ENCODE measurements at regions of chr14 and their contacts with region 1.

Region 1: GRCh38 chr14:34554540-34555333 is 15.2 kb upstream of the EAPP start:
- DNase-seq: peak; percentile 12
- H3K4me3 Mint-ChIP-seq: peak overlapping the region; percentile 62
- H3K27ac Mint-ChIP-seq: peak overlapping the region; percentile 44
- H3K4me1 Mint-ChIP-seq: peaks cover 10% of the 10 kb centered on the region
- H3K27me3 Mint-ChIP-seq: no peaks in the 10 kb centered on the region
- CTCF ChIP-seq: no peak

Region 2: DNA sequence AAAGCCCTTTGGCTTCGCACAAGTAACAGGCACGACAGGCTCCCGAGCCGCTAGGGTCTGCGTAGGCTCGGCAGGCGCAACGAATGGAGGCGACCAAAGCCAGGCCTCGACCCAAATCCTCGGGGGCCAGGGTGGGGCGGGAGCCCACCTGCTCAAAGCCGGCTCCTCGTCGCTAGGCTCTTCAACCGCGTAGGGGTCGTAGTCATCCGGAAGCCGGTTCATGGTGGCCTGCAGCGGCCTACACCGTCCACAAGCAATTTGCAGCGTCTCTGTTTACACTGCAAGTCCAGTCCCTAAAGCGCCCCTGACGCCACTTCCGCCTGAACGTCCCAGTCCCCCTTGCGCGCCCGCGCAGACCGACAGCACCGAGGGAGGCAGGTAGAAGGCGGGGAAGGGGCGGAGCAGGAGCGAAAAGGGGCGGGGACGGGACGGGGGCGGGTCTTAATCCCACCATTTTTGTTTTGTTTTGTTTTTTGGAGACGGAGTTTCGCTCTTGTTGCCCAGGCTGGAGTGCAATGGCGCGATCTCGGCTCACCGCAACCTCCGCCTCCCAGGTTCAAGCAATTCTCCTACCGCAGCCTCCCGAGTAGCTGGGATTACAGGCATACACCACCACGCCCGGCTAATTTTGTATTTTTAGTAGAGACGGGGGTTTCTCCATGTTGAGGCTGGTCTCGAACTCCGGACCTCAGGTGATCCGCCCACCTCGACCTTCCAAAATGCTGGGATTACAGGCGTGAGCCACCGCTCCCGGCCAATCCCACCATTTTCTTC is 15.1 kb before region 1 on chr14 and contains the start of gene EAPP:
- CTCF ChIA-PET with region 1: no interaction called
- POLR2A ChIA-PET with region 1: interaction called, 14 read pairs
- intact Hi-C with region 1: no loop called
- DNase-seq: peak; percentile 97
- H3K4me3 Mint-ChIP-seq: peak within 1 kb of the TSS; percentile 98
- H3K27ac Mint-ChIP-seq: peak within 1 kb of the TSS; percentile 100
- H3K4me1 Mint-ChIP-seq: peaks cover 4% of the 10 kb centered on the region
- H3K27me3 Mint-ChIP-seq: no peaks in the 10 kb centered on the region
- CTCF ChIP-seq: no peak
- total RNA-seq, gene EAPP: 31.5 and 38.9 TPM in 2 replicates

Measured in MCF 10A (cell line).